PC-9 (cell line): ENCODE measurements at regions of chr1 and their contacts with region 1.

Region 1: DNA sequence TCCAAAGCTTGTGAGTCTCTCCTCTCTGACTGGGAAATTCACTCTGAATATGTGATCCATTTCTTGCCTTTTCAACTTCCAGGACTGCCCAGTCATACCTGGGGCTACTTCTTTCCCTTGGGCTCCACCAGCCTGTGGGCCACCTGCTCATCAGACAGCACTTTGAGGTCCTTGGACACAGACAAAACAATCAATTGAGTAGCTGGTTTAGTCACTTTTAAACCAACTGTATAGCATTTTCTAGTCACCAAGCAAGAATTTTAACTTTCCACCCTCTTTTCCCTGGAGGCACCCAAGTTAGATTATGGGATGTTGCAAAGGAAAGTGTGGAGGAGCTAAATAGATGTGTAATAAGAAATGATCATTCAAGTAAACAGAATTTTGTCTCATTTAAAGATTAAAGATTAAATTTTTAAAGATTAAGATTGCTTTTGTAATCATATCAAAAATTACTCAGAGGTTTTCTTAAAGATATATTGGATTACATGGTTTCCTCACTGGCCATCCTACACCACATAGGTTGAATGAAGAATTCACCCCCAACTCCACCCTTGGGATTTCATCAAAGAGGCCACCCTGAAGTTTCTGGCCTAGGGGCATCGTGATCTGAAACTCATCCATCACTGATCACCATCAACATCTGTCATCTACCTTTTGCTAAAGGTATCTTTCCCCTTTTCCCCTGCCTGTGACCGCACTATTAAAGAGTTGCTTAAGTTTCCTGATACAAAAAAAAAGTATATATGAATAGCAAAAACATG is 219.2 kb upstream of the NR5A2 start:
- DNase-seq: peak; percentile 59 to 96
- H3K4me3 ChIP-seq: no peak overlapping the region; the same call in 1 of the 2 replicates
- H3K27ac ChIP-seq: peak overlapping the region; percentile 93
- H3K4me1 ChIP-seq: peaks cover 44% of the 10 kb centered on the region
- H3K27me3 ChIP-seq: no peaks in the 10 kb centered on the region
- CTCF ChIP-seq: no peak

Region 2: GRCh38 chr1:199759268-199759724 is 49.0 kb before region 1 on chr1:
- CTCF ChIA-PET with region 1: no interaction called
- POLR2A ChIA-PET with region 1: no interaction called
- intact Hi-C with region 1: loop called (anchors 1 kb)
- DNase-seq: peak; percentile 70 to 89
- H3K4me3 ChIP-seq: peak overlapping the region; percentile 37; the same call in 1 of the 2 replicates
- H3K27ac ChIP-seq: peak overlapping the region; percentile 91
- H3K4me1 ChIP-seq: peaks cover 28% of the 10 kb centered on the region
- H3K27me3 ChIP-seq: no peaks in the 10 kb centered on the region
- CTCF ChIP-seq: no peak

Region 3: DNA sequence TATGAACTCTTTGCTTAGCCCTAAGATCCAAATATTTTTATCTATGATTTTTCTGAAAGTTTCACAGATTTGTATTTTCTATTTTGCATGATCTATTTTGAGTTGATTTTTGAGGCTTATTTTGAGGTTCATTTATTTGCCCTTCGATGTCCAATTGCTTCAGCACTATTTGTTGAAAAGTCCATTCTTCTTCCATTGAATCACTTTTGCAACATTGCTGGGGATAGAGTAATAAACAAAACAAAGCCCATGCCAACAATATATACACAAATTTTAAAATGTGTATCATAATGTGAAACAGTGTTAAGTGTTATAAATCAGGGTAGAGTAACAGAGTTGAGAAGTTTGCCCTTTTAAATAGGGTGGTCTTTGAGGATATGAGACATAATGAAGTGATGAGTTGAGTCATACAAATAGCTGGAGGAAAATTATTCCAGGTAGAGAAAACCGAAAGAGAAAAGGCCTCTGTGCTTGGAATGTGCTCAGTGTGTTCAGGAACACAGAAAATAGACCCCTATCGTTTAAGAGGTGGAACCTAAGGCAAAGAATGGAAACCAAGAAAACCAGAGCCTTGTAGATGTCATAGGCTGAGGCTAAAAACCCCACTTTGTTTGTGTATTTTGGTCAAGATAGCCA is 46.5 kb after region 1 on chr1:
- CTCF ChIA-PET with region 1: no interaction called
- POLR2A ChIA-PET with region 1: no interaction called
- intact Hi-C with region 1: loop called (anchors 5 kb)
- DNase-seq: no peak
- H3K4me3 ChIP-seq: no peak overlapping the region
- H3K27ac ChIP-seq: no peak overlapping the region
- H3K4me1 ChIP-seq: peaks cover 16% of the 10 kb centered on the region
- H3K27me3 ChIP-seq: no peaks in the 10 kb centered on the region
- CTCF ChIP-seq: no peak

Region 4: DNA sequence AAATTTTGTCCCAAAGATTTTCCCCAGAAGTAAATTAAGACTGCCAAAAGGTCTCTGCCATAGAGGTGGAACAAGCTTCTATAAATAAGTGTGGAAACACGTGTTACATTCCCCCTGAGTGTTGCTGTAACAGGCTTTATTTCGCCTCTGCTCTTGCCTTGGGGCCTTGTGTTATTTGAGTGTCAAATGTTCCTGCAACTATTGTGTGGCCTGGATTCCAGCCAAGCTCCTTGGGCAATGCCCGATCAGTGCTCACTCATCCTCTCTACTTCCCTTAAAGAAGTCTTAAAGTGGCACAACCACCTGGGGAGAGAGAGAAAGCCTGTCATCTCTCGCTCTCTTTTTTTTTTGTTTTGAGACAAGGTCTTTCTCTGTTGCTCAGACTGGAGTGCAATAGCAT is 375.9 kb after region 1 on chr1:
- CTCF ChIA-PET with region 1: no interaction called
- POLR2A ChIA-PET with region 1: no interaction called
- intact Hi-C with region 1: loop called (anchors 1 kb)
- DNase-seq: peak; percentile 90 to 96
- H3K4me3 ChIP-seq: no peak overlapping the region
- H3K27ac ChIP-seq: peak overlapping the region; percentile 42
- H3K4me1 ChIP-seq: peaks cover 47% of the 10 kb centered on the region
- H3K27me3 ChIP-seq: no peaks in the 10 kb centered on the region
- CTCF ChIP-seq: no peak